MCF 10A (cell line): ENCODE measurements at regions of chr17 and their contacts with region 1.

Region 1: DNA sequence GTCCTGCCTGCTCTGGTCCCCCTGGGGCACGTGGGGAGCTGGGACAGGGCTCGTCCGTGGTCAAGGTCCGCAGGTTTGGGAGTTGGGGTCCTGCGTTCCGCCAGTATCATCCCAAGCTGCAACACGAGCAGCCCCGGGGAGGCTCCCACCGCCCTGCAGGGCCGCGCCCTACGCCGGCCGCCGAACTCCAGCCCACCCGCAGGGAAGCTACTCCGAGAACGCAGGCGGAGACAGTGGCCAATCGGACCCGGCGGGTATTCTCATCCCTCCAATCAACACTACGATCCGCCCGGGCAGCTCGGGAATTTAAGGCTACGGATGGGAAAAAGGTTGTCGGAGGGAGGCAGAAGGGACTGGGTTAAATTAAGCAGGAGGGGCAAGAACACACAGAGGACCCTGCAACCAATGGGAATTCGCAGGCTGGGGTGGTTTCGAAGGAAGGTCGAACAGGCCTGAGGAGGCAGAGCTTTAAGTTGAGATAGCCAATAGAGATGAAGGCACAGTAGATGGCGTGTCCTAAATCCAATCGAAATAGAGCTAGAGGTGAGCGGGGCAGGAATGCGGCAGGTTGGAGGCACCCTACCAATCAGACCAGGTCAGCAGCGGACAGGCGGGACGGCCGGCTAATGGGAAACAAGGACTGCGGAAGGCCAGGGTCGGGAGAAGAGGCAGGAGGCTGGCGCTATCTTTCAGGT is 626 bp downstream of the SPAG7 start:
- DNase-seq: peak; percentile 99
- H3K4me3 Mint-ChIP-seq: no peak overlapping the region
- H3K27ac Mint-ChIP-seq: no peak overlapping the region
- H3K4me1 Mint-ChIP-seq: peaks cover 15% of the 10 kb centered on the region
- H3K27me3 Mint-ChIP-seq: no peaks in the 10 kb centered on the region
- CTCF ChIP-seq: no peak

Region 2: DNA sequence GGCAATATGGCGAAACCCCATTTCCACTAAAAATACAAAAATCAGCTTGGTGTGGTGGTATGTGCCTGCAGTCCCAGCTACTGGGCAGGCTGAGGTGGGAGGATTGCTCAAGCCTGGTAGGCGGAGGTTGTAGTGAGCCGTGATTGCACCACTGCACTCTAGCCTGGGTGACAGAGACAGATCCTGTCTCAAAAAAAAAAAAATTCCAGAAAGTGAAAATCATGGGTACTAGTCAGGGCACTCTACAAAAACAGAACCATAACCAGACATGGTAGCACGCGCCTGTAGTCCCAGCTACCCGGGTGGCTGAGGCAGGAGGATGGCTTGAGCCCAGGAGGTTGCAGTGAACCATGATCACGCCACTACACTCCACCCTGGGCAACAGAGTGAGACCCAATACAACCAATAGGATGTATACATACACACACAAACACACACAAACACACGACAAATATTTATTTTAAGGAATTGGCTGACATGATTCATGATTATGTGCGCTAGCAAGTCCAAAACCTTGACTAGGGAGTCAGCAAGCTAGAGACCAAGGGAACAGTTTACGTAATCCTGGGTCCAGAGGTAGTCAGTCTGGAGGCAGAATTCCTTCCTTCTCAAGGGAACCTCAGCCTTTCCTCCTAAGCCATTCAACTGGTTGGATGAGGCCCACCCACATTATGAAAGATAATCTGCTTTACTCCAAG is 46.5 kb before region 1 on chr17:
- CTCF ChIA-PET with region 1: interaction called, 5 read pairs
- POLR2A ChIA-PET with region 1: interaction called, 32 read pairs
- intact Hi-C with region 1: no loop called
- DNase-seq: peak; percentile 83
- H3K4me3 Mint-ChIP-seq: peak overlapping the region; percentile 39
- H3K27ac Mint-ChIP-seq: peak overlapping the region; percentile 74
- H3K4me1 Mint-ChIP-seq: peaks cover 16% of the 10 kb centered on the region
- H3K27me3 Mint-ChIP-seq: no peaks in the 10 kb centered on the region
- CTCF ChIP-seq: no peak

Region 3: GRCh38 chr17:4939796-4940624 is 27.0 kb before region 1 on chr17 and contains the starts of genes RNF167 and SLC25A11:
- CTCF ChIA-PET with region 1: interaction called, 4 read pairs
- POLR2A ChIA-PET with region 1: interaction called, 639 read pairs
- intact Hi-C with region 1: no loop called
- DNase-seq: peak; percentile 99
- H3K4me3 Mint-ChIP-seq: peak within 1 kb of the TSS; percentile 91
- H3K27ac Mint-ChIP-seq: peak within 1 kb of the TSS; percentile 98
- H3K4me1 Mint-ChIP-seq: peaks cover 44% of the 10 kb centered on the region
- H3K27me3 Mint-ChIP-seq: no peaks in the 10 kb centered on the region
- CTCF ChIP-seq: no peak
- total RNA-seq, gene RNF167: 100.0 and 109 TPM in 2 replicates
- total RNA-seq, gene SLC25A11: 46.8 and 54.5 TPM in 2 replicates

Region 4: GRCh38 chr17:4948931-4949320 is 18.1 kb before region 1 on chr17:
- CTCF ChIA-PET with region 1: interaction called, 4 read pairs
- POLR2A ChIA-PET with region 1: interaction called, 639 read pairs
- intact Hi-C with region 1: loop called (anchors 1 kb)
- DNase-seq: peak; percentile 90
- H3K4me3 Mint-ChIP-seq: peak overlapping the region; percentile 74
- H3K27ac Mint-ChIP-seq: peak overlapping the region; percentile 24
- H3K4me1 Mint-ChIP-seq: peaks cover 42% of the 10 kb centered on the region
- H3K27me3 Mint-ChIP-seq: no peaks in the 10 kb centered on the region
- CTCF ChIP-seq: no peak

Region 5: GRCh38 chr17:4980644-4981216 is 13.7 kb after region 1 on chr17:
- CTCF ChIA-PET with region 1: interaction called, 6 read pairs
- POLR2A ChIA-PET with region 1: interaction called, 81 read pairs
- intact Hi-C with region 1: no loop called
- DNase-seq: peak; percentile 63
- H3K4me3 Mint-ChIP-seq: no peak overlapping the region
- H3K27ac Mint-ChIP-seq: no peak overlapping the region
- H3K4me1 Mint-ChIP-seq: peaks cover 5% of the 10 kb centered on the region
- H3K27me3 Mint-ChIP-seq: no peaks in the 10 kb centered on the region
- CTCF ChIP-seq: peak; percentile 60

Region 6: GRCh38 chr17:4986951-4987766 is 20.2 kb after region 1 on chr17 and contains the start of gene CAMTA2:
- CTCF ChIA-PET with region 1: interaction called, 10 read pairs
- POLR2A ChIA-PET with region 1: interaction called, 81 read pairs
- intact Hi-C with region 1: no loop called
- DNase-seq: peak; percentile 67
- H3K4me3 Mint-ChIP-seq: peak within 1 kb of the TSS; percentile 87
- H3K27ac Mint-ChIP-seq: peak within 1 kb of the TSS; percentile 84
- H3K4me1 Mint-ChIP-seq: peaks cover 28% of the 10 kb centered on the region
- H3K27me3 Mint-ChIP-seq: no peaks in the 10 kb centered on the region
- CTCF ChIP-seq: peak; percentile 60
- total RNA-seq, gene CAMTA2: 126 and 154 TPM in 2 replicates

Region 7: DNA sequence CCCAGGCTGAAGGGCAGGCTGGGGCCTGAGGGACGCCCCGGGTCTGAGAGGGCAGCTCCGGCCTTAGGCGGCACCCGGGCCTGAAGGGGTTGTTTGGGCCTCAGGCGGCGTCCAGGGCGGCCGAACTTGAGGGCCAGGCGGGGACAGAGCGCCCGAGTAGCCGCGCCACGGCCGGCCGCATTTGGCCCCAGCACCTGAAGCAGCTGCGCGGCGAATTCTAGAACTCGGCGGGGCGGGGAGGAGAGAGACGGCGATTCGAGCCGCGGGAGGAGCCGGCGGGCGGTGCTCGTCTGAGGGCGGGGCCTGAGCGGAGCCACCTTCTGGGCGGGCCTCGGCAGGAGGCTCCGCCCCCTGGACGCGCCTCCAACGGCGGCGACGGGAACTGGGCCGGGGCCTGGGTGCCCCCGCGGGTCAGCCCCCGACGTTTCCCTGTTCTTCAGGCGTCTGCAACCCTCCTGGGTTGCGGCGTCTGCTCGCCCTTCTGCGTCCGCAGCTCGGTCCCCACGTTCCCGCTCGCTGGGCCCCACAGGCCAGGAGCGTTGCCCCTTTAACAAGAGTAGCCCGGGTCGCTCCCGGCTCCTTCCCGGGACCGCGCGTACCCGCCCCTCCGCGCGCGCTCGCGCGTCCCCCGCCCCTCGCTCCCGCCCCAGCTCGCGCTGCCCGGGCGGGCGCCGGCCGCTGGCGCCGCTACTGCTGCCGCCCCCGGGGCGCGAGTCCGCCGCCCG is 30.5 kb after region 1 on chr17 and contains the starts of genes INCA1 and KIF1C:
- CTCF ChIA-PET with region 1: interaction called, 3 read pairs
- POLR2A ChIA-PET with region 1: interaction called, 31 read pairs
- intact Hi-C with region 1: no loop called
- DNase-seq: peak; percentile 90
- H3K4me3 Mint-ChIP-seq: peak within 1 kb of the TSS; percentile 97
- H3K27ac Mint-ChIP-seq: peak within 1 kb of the TSS; percentile 86
- H3K4me1 Mint-ChIP-seq: peaks cover 23% of the 10 kb centered on the region
- H3K27me3 Mint-ChIP-seq: no peaks in the 10 kb centered on the region
- CTCF ChIP-seq: no peak
- total RNA-seq, gene INCA1: 0.44 and 0.49 TPM in 2 replicates
- total RNA-seq, gene KIF1C: 84.8 and 100 TPM in 2 replicates

Region 8: DNA sequence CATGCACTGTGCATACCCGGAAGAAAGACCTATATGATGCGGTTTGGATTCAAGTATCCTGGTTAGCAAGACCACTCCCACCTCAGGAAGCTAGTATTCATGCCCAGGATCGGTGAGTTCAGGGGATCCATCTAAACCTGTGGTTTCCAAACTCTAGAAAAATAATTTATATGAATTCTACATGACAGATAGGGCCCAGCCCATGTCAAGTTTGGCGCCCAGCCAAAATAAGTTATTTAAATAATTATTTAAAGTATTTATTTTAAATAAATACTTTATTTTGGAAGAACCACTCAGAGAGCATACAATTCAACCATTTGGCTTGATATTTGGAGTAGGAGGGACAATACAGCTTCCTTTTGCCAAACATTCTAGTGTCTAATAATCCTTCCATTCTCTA is 188.5 kb after region 1 on chr17:
- CTCF ChIA-PET with region 1: no interaction called
- POLR2A ChIA-PET with region 1: no interaction called
- intact Hi-C with region 1: no loop called
- DNase-seq: no peak
- H3K4me3 Mint-ChIP-seq: no peak overlapping the region
- H3K27ac Mint-ChIP-seq: no peak overlapping the region
- H3K4me1 Mint-ChIP-seq: no peaks in the 10 kb centered on the region
- H3K27me3 Mint-ChIP-seq: peaks cover 39% of the 10 kb centered on the region
- CTCF ChIP-seq: no peak

Region 9: GRCh38 chr17:5405400-5405799 is 438.4 kb after region 1 on chr17:
- CTCF ChIA-PET with region 1: no interaction called
- POLR2A ChIA-PET with region 1: no interaction called
- intact Hi-C with region 1: no loop called
- DNase-seq: no peak
- H3K4me3 Mint-ChIP-seq: no peak overlapping the region
- H3K27ac Mint-ChIP-seq: no peak overlapping the region
- H3K4me1 Mint-ChIP-seq: no peaks in the 10 kb centered on the region
- H3K27me3 Mint-ChIP-seq: no peaks in the 10 kb centered on the region
- CTCF ChIP-seq: no peak